Natural killer cell (primary cell): ENCODE measurements at regions of chr17 and their contacts with region 1.

Region 1: GRCh38 chr17:27544350-27545131 is 86.4 kb upstream of the LGALS9 start:
- DNase-seq: peak; percentile 40 to 58
- ATAC-seq: peak; percentile 90 to 97 (median 90)
- H3K4me3 ChIP-seq: no peak overlapping the region
- H3K4me3 Mint-ChIP-seq: peak overlapping the region; percentile 61
- H3K27ac ChIP-seq: peak overlapping the region; percentile 37
- H3K27ac Mint-ChIP-seq: peak overlapping the region; percentile 75 to 82
- H3K4me1 ChIP-seq: peaks cover 55% of the 10 kb centered on the region
- H3K4me1 Mint-ChIP-seq: peaks cover 52 to 55% of the 10 kb centered on the region in 2 donors
- H3K27me3 ChIP-seq: no peaks in the 10 kb centered on the region
- H3K27me3 Mint-ChIP-seq: no peaks in the 10 kb centered on the region
- CTCF ChIP-seq: no peak

Region 2: GRCh38 chr17:27473748-27474609 is 70.6 kb before region 1 on chr17:
- intact Hi-C with region 1: loop called (anchors 2 kb)
- DNase-seq: peak; percentile 51 to 86
- ATAC-seq: peak; percentile 55 to 76 (median 74)
- H3K4me3 ChIP-seq: peak overlapping the region; percentile 3
- H3K4me3 Mint-ChIP-seq: peak overlapping the region; percentile 81
- H3K27ac ChIP-seq: peak overlapping the region; percentile 81
- H3K27ac Mint-ChIP-seq: peak overlapping the region; percentile 91 to 96
- H3K4me1 ChIP-seq: peaks cover 78% of the 10 kb centered on the region
- H3K4me1 Mint-ChIP-seq: peaks cover 69 to 72% of the 10 kb centered on the region in 2 donors
- H3K27me3 ChIP-seq: no peaks in the 10 kb centered on the region
- H3K27me3 Mint-ChIP-seq: no peaks in the 10 kb centered on the region
- CTCF ChIP-seq: no peak

Region 3: GRCh38 chr17:27481327-27481726 is 63.2 kb before region 1 on chr17:
- intact Hi-C with region 1: loop called (anchors 2 kb)
- DNase-seq: peak; percentile 34 to 73
- ATAC-seq: peak; percentile 88 to 99 (median 95)
- H3K4me3 ChIP-seq: no peak overlapping the region
- H3K4me3 Mint-ChIP-seq: peak overlapping the region; percentile 55
- H3K27ac ChIP-seq: peak overlapping the region; percentile 1
- H3K27ac Mint-ChIP-seq: peak overlapping the region; percentile 75 to 86
- H3K4me1 ChIP-seq: peaks cover 57% of the 10 kb centered on the region
- H3K4me1 Mint-ChIP-seq: peaks cover 35 to 48% of the 10 kb centered on the region in 2 donors
- H3K27me3 ChIP-seq: no peaks in the 10 kb centered on the region
- H3K27me3 Mint-ChIP-seq: no peaks in the 10 kb centered on the region
- CTCF ChIP-seq: no peak

Region 4: DNA sequence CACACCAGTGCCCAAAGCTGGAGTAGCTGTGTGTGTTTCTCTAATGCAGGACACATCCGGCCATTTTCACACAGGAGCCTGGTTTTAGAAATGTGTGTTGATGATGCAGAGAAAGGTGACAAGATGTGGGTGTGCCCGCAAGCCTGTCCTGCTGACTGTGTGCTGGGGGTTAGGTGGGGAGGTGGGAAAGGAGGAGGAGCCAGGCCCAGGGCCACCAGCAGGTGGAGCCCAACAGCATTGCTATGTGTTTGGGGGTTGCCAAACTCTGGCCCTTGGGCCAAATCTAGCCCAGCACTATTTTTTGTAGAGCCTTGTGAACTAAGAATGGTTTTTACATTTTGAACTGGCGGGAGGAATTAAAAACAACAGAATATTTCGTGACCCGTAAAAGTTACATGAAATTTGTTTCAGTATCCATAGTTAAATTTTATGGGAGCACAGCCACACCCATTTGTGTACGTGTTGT is 24.7 kb after region 1 on chr17:
- intact Hi-C with region 1: loop called (anchors 1 kb)
- DNase-seq: peak; percentile 79 to 80
- ATAC-seq: peak; percentile 97 to 99 (median 97)
- H3K4me3 ChIP-seq: no peak overlapping the region
- H3K4me3 Mint-ChIP-seq: peak overlapping the region; percentile 81
- H3K27ac ChIP-seq: peak overlapping the region; percentile 65
- H3K27ac Mint-ChIP-seq: peak overlapping the region; percentile 93 to 94
- H3K4me1 ChIP-seq: peaks cover 43% of the 10 kb centered on the region
- H3K4me1 Mint-ChIP-seq: peaks cover 53 to 58% of the 10 kb centered on the region in 2 donors
- H3K27me3 ChIP-seq: no peaks in the 10 kb centered on the region
- H3K27me3 Mint-ChIP-seq: no peaks in the 10 kb centered on the region
- CTCF ChIP-seq: peak; percentile 74

Region 5: DNA sequence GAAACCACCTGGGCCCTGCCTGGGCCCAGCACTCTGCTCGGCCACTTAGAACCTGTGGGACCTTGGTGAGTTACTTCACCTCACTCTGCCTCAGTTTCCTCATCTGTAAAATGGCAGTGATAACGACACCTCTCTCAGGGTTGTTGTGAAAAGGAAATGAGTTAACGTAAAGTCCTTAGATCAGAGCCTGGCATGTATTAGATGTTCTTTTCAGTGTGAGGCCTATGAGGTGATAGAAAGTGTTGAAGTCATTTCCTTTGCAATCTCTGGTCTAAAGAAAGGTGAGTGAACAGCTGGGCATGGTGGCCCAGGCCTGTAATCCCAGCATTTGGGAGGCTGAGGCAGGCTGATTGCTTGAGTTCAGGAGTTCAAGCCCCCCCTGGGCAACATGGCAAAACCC is 34.8 kb after region 1 on chr17:
- intact Hi-C with region 1: no loop called
- DNase-seq: no peak
- ATAC-seq: peak in 2 of 3 donors; percentile 48 to 59
- H3K4me3 ChIP-seq: no peak overlapping the region
- H3K4me3 Mint-ChIP-seq: no peak overlapping the region
- H3K27ac ChIP-seq: no peak overlapping the region
- H3K27ac Mint-ChIP-seq: peak overlapping the region in 1 of 2 donors; percentile 25
- H3K4me1 ChIP-seq: peaks cover 25% of the 10 kb centered on the region
- H3K4me1 Mint-ChIP-seq: peaks cover 55% of the 10 kb centered on the region in 2 donors
- H3K27me3 ChIP-seq: no peaks in the 10 kb centered on the region
- H3K27me3 Mint-ChIP-seq: no peaks in the 10 kb centered on the region
- CTCF ChIP-seq: no peak